ENCODE measurements at regions of chr7 and their contacts with region 1.

Region 1: DNA sequence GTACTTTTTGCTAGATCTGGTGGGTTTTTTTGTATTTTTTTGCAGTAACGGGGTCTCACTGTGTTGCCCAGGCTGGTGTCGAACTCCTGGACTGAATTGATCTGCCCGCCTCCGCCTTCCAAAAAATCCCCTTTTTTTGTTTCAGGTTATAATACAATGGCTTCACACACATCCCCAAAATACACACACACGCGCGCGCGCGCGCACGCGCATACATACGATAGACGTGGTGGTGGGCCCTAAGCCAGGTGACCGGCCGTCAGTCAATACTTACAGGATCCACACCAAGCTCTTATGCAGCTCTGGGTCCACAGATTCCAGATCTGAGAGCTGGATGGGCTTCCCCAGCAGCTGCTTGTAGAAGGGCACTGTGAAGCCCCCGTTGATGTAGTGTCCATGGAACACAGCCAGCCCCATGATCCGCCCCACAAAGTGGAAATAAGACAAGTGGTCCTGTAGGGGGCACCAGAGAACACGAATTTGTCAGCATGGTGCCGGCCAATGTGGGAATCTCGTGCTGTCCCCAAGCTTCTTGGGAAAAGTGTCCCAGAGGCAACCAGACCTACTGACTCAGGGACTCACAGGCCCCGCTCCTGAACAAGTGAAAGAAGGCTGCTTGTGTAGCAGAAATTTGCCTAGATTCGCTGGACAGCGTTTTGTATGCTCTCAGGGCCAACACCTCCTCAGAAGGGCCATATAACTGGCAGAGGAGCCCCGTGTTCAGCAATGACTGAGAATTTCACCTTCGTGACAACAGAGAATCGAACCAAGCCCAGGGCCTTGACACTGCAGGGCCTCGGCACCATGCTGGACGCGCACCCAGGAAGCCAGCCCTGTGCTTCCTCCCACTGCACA is 103.6 kb downstream of the SMURF1 start:
- DNase-seq: peak; percentile 86
- CTCF ChIP-seq: peak; percentile 83

Region 2: DNA sequence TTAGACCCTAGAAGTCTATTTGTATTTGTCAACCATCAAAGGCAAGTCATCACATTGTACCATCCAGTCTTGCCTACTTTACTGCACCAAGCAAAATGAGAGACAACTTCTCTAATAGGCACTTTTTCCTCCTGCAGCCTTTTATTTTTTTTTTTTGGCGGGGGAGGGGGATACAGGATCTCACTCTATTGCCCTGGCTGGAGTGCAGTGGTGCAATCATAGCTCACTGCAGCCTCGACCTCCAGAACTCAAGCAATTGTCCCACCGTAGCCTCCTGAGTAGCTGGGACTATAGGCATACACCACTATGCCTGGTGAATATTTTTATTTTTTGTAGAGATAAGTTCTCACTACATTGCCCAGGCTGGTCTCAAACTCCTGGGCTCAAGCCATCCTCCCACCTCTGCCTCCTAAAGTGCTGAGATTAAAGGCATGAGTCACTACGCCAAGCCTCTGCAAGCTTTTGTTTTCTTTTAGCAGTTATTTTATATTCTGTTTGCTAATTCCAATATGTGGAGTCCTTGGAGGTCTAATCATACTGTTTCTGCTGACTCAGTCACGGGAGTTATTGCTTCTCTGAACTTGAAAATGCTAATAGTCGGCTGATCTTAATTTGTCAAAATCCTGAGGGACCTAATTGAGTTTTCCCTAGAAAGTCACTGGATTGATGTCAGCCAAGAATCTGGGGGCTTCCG is 153.3 kb after region 1 on chr7:
- CTCF ChIA-PET with region 1: no interaction called
- POLR2A ChIA-PET with region 1: no interaction called
- DNase-seq: no peak
- CTCF ChIP-seq: no peak

Region 3: DNA sequence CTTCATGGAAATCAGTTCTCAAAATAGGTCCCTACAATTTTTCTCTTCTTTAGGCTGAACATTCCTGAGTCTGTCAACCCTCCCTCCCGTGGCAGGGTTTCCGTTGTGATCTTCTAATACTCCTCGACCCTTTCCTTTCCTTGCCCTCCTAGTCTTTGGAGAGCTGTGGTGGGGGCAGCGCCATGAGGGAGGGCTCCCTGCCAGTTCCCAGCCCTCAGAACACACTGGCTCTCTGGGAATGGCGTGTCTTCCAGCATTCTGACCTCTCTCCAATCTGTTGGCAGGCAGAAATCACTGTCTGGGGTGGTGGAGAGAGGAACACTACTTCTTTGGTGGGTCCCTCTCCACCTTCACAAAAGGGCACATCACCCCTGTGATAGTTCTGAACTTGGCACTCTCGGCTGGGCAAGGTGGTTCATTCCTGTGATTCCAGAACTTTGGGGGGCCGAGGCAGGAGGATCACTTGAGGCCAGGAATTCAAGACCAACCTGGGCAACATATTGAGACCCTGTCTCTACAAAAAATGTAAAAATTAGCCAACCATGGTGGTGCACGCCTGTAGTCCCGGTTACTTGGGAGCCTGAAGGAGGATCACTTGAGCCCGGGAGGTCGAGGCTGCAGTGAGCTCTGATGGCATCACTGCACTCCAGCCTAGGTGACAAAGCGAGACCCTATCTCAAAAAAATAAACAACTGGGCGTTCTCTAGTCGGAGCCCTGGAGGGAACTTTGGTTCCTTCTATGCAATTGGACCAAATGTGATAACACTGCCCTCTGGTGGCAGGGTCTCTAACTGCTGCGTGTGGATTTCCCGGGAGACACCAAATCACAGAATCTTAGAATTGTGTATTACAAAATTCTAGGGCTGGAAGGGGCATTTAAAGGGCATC is 272.2 kb after region 1 on chr7:
- CTCF ChIA-PET with region 1: interaction called, 36 read pairs
- POLR2A ChIA-PET with region 1: no interaction called
- DNase-seq: peak; percentile 74
- CTCF ChIP-seq: peak; percentile 87

Measured in GM10248 (cell line).